ENCODE measurements at regions of chr15 and their contacts with region 1.

Region 1: DNA sequence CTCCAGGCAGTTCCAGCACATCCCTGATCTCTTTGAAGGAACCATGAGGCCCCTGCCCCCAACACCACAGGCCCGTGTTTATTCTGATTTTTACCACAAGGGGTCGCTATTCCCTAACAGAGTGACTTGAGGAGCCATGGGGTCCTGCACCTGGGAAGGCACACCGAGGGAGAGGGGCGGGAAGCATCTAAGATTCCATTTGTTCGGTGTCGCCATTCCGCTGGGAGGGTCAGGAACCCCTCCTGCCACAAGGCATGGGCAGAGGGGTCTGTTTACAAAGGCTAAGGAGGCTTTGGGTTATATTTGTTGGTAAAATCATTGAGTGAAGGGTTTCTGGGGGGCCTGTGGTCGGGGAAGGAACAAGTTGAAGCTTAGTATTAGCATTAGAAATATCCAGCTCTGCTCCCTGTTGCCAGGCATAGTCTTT is 77.1 kb downstream of the WDR76 start:
- DNase-seq: peak; percentile 72
- ATAC-seq: peak; percentile 79
- H3K4me3 Mint-ChIP-seq: no peak overlapping the region
- H3K27ac Mint-ChIP-seq: no peak overlapping the region
- H3K4me1 Mint-ChIP-seq: peaks cover 2% of the 10 kb centered on the region
- H3K27me3 Mint-ChIP-seq: no peaks in the 10 kb centered on the region
- CTCF ChIP-seq: peak; percentile 89

Region 2: DNA sequence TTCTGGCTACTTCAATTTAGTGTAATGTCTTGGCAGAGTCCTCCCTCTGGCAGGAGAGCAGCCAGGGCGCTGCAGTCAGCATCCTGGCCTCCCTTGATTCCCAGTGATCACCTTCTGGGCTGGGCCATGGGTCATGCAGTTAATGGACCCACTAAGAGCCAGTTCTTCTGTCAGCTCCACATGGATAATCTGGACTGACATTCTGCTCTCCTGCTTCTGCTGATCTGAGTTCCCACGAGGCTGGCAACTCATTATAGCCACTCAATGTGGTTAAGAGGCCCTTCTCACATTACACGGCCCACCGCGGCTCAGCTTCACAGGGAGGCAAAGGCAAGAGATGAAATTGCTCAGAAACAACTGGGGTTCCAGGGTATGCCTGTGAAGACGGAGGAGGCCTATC is 16.9 kb after region 1 on chr15:
- CTCF ChIA-PET with region 1: interaction called, 14 read pairs
- POLR2A ChIA-PET with region 1: no interaction called
- intact Hi-C with region 1: no loop called
- DNase-seq: no peak
- ATAC-seq: no peak
- H3K4me3 Mint-ChIP-seq: no peak overlapping the region
- H3K27ac Mint-ChIP-seq: no peak overlapping the region
- H3K4me1 Mint-ChIP-seq: no peaks in the 10 kb centered on the region
- H3K27me3 Mint-ChIP-seq: peaks cover 3% of the 10 kb centered on the region
- CTCF ChIP-seq: no peak

Region 3: DNA sequence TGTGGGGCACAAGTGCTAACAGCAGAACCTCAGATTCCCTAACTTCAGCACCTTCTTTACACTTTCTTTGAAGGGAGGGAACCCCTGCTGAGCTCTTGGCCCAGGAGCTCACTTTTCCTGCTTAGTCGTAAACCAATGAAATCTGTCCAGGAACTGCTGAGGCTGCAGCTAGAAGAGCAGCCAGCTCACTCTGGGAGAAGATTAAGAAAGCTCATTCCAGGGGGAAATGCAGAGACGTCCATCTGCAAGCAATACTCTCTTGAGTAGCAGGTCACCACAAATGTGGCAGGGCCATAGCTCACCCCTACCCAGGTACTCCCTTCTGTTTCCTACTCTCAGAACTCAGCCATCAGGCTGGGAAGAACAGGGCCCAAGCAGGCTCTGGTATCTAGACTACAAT is 26.2 kb after region 1 on chr15:
- CTCF ChIA-PET with region 1: interaction called, 20 read pairs
- POLR2A ChIA-PET with region 1: no interaction called
- intact Hi-C with region 1: no loop called
- DNase-seq: no peak
- ATAC-seq: no peak
- H3K4me3 Mint-ChIP-seq: no peak overlapping the region
- H3K27ac Mint-ChIP-seq: no peak overlapping the region
- H3K4me1 Mint-ChIP-seq: no peaks in the 10 kb centered on the region
- H3K27me3 Mint-ChIP-seq: peaks cover 6% of the 10 kb centered on the region
- CTCF ChIP-seq: no peak

Region 4: DNA sequence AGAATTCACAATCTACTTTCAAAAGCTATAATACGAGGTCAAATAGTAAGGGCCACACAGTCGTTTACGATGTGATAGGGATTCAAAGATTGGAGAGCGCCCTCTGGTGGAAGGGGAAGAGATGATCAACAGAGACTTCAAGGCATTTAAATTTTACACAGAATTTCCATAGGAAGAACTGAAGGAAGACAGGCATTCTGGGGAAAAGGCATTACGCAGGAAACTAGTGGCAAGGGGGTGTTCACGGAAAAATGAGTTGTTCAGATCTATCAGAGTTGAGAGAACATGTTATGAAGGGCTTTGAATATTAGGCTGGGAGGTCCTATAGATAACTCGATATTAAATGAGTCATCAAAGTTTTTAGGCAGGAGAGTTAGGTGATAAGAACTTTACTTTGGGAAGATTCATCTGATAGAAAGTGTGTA is 162.5 kb after region 1 on chr15:
- CTCF ChIA-PET with region 1: interaction called, 95 read pairs
- POLR2A ChIA-PET with region 1: no interaction called
- intact Hi-C with region 1: loop called (anchors 1 kb)
- DNase-seq: peak; percentile 79
- ATAC-seq: peak; percentile 68
- H3K4me3 Mint-ChIP-seq: no peak overlapping the region
- H3K27ac Mint-ChIP-seq: no peak overlapping the region
- H3K4me1 Mint-ChIP-seq: peaks cover 5% of the 10 kb centered on the region
- H3K27me3 Mint-ChIP-seq: peaks cover 20% of the 10 kb centered on the region
- CTCF ChIP-seq: peak; percentile 90

Region 5: GRCh38 chr15:44215594-44215993 is 311.7 kb after region 1 on chr15:
- CTCF ChIA-PET with region 1: interaction called, 4 read pairs
- POLR2A ChIA-PET with region 1: no interaction called
- intact Hi-C with region 1: loop called (anchors 10 kb)
- DNase-seq: no peak
- ATAC-seq: no peak
- H3K4me3 Mint-ChIP-seq: no peak overlapping the region
- H3K27ac Mint-ChIP-seq: no peak overlapping the region
- H3K4me1 Mint-ChIP-seq: peaks cover 2% of the 10 kb centered on the region
- H3K27me3 Mint-ChIP-seq: peaks cover 15% of the 10 kb centered on the region
- CTCF ChIP-seq: no peak